Natural killer cell (primary cell): ENCODE measurements at regions of chr2 and their contacts with region 1.

Region 1: GRCh38 chr2:226310146-226310545 is 489.5 kb downstream of the IRS1 start:
- DNase-seq: no peak
- ATAC-seq: no peak
- H3K4me3 ChIP-seq: no peak overlapping the region
- H3K4me3 Mint-ChIP-seq: no peak overlapping the region
- H3K27ac ChIP-seq: no peak overlapping the region
- H3K27ac Mint-ChIP-seq: no peak overlapping the region
- H3K4me1 ChIP-seq: no peaks in the 10 kb centered on the region
- H3K4me1 Mint-ChIP-seq: no peaks in the 10 kb centered on the region
- H3K27me3 ChIP-seq: no peaks in the 10 kb centered on the region
- H3K27me3 Mint-ChIP-seq: no peaks in the 10 kb centered on the region
- CTCF ChIP-seq: no peak

Region 2: DNA sequence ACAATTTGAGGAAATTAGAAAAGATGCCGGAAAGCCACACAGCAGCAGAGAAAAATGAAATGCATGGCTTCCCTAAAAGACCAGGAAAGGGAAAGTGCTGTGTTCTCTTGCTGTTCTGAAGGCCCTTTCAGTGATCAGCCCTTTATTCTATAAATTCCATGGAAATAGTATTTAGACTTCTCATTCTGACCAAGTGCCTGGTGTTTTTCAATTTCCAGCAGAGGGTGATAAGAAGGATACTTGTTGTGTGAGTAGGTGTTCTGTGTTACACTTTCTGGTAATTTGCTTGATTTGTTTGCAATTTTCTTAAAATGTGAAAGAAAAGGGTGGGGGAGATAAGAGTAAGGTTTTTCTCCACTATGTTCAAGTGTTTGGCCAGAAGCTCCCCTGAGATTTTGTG is 15.0 kb before region 1 on chr2:
- intact Hi-C with region 1: loop called (anchors 2 kb)
- DNase-seq: no peak
- ATAC-seq: no peak
- H3K4me3 ChIP-seq: no peak overlapping the region
- H3K4me3 Mint-ChIP-seq: no peak overlapping the region
- H3K27ac ChIP-seq: no peak overlapping the region
- H3K27ac Mint-ChIP-seq: no peak overlapping the region
- H3K4me1 ChIP-seq: no peaks in the 10 kb centered on the region
- H3K4me1 Mint-ChIP-seq: no peaks in the 10 kb centered on the region
- H3K27me3 ChIP-seq: no peaks in the 10 kb centered on the region
- H3K27me3 Mint-ChIP-seq: no peaks in the 10 kb centered on the region
- CTCF ChIP-seq: no peak